Left ventricle myocardium inferior (tissue), 1 donor: ENCODE measurements at regions of chrX and their contacts with region 1.

Region 1: GRCh38 chrX:23901805-23902204 is 5.9 kb downstream of the APOO start:
- DNase-seq: no peak
- H3K4me3 ChIP-seq: peak overlapping the region; percentile 46
- H3K27ac ChIP-seq: peak overlapping the region; percentile 81
- H3K4me1 ChIP-seq: peaks cover 45% of the 10 kb centered on the region
- H3K27me3 ChIP-seq: no peaks in the 10 kb centered on the region
- CTCF ChIP-seq: peak; percentile 61

Region 2: DNA sequence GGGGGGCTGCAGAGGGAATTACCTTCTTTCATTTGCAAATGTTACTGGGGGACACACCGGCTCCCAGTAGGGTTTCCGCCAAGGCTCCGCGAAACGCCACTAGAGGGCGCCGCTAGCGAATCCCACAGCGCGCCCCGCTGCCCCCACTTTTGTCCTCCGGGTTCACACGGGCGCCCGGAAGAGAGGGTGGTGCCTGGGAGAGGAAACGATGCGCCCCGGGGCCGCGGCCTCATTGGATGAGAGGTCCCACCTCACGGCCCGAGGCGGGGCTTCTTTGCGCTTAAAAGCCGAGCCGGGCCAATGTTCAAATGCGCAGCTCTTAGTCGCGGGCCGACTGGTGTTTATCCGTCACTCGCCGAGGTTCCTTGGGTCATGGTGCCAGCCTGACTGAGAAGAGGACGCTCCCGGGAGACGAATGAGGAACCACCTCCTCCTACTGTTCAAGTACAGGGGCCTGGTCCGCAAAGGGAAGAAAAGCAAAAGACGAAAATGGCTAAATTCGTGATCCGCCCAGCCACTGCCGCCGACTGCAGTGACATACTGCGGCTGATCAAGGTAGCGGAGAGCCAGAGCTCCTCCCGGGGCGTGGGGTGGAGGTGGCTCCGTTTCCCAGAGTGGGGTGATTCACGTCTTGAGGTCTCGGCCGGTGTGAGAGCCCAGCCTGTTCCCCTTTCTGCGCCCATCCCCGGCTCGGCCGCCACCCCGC is 118.8 kb before region 1 on chrX and contains the start of gene SAT1:
- intact Hi-C with region 1: loop called (anchors 5 kb)
- DNase-seq: peak; percentile 95
- H3K4me3 ChIP-seq: peak within 1 kb of the TSS; percentile 80
- H3K27ac ChIP-seq: peak within 1 kb of the TSS; percentile 95
- H3K4me1 ChIP-seq: peaks cover 11% of the 10 kb centered on the region
- H3K27me3 ChIP-seq: no peaks in the 10 kb centered on the region
- CTCF ChIP-seq: peak; percentile 76
- total RNA-seq, gene SAT1: 99.7 TPM